Caco-2 (cell line): ENCODE measurements at regions of chr6 and their contacts with region 1.

Region 1: DNA sequence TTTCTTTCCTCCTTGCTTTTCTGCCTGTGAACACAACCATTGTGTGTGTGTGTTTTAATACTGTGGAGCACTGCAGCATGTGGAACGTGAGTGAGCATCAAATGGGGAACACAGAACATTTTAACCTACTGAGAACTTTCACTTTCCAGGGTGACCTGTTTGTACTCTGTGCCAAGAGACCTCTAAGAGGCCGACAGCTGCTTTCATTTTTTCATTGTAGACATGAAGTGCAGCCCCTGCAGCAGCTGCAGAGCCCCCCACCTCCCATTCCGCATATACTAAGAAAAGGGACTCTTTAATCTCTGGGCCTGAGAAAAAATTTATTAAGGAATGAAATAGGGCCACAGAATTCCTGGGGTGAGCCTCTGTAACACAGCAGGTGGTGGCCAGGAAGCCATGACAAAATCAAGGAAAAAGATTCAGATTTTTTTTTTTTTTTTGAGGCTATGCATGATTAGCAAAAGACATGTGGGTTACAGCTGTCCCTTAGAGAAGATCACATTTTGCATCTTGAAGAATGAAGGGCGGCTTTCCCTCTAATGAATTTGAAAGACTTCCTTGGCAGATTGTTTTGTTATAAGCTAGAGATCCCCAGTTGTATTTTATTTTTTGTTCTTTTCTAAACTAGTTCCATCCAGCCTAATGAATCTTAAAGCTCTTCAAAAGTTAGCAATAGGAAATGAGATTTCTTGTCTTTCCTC is 503.4 kb downstream of the CD109 start:
- DNase-seq: no peak
- H3K4me3 ChIP-seq: no peak overlapping the region
- H3K4me3 Mint-ChIP-seq: no peak overlapping the region
- H3K27ac Mint-ChIP-seq: no peak overlapping the region
- H3K4me1 ChIP-seq: peaks cover 24% of the 10 kb centered on the region
- H3K4me1 Mint-ChIP-seq: peaks cover 20% of the 10 kb centered on the region
- H3K27me3 ChIP-seq: no peaks in the 10 kb centered on the region
- H3K27me3 Mint-ChIP-seq: no peaks in the 10 kb centered on the region
- CTCF ChIP-seq: no peak

Region 2: DNA sequence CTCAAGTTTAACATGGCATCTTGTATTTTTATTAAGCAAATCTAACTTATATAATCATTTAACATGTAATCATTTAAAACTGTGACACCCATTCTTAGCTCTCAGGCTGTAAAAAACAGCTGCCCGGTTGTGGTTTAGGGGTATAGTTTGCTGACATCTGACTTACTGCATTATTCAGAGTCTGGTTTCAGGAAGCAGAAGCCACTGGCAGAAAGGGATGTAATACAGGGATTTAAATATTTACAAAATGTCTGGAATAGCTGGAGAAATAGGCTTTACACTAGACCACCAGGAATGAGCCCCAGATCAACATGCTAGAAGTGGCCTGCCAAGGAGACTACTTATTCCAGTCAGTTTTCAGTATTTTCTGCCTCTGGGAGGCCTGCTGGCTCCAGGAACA is 82.3 kb before region 1 on chr6:
- CTCF ChIA-PET with region 1: no interaction called
- POLR2A ChIA-PET with region 1: no interaction called
- intact Hi-C with region 1: no loop called
- DNase-seq: no peak
- H3K4me3 ChIP-seq: no peak overlapping the region
- H3K4me3 Mint-ChIP-seq: no peak overlapping the region
- H3K27ac Mint-ChIP-seq: no peak overlapping the region
- H3K4me1 ChIP-seq: no peaks in the 10 kb centered on the region
- H3K4me1 Mint-ChIP-seq: peaks cover 7% of the 10 kb centered on the region
- H3K27me3 ChIP-seq: no peaks in the 10 kb centered on the region
- H3K27me3 Mint-ChIP-seq: no peaks in the 10 kb centered on the region
- CTCF ChIP-seq: no peak

Region 3: GRCh38 chr6:74137911-74138310 is 61.5 kb before region 1 on chr6:
- CTCF ChIA-PET with region 1: no interaction called
- POLR2A ChIA-PET with region 1: no interaction called
- intact Hi-C with region 1: loop called (anchors 2 kb)
- DNase-seq: peak in 1 of 2 experiments; percentile 62
- H3K4me3 ChIP-seq: no peak overlapping the region
- H3K4me3 Mint-ChIP-seq: peak overlapping the region; percentile 58
- H3K27ac Mint-ChIP-seq: peak overlapping the region; percentile 89
- H3K4me1 ChIP-seq: 0 out of 2 replicates have a peak, but pooled peaks cover 3% of the 10 kb centered on the region
- H3K4me1 Mint-ChIP-seq: peaks cover 9% of the 10 kb centered on the region
- H3K27me3 ChIP-seq: no peaks in the 10 kb centered on the region
- H3K27me3 Mint-ChIP-seq: no peaks in the 10 kb centered on the region
- CTCF ChIP-seq: no peak

Region 4: DNA sequence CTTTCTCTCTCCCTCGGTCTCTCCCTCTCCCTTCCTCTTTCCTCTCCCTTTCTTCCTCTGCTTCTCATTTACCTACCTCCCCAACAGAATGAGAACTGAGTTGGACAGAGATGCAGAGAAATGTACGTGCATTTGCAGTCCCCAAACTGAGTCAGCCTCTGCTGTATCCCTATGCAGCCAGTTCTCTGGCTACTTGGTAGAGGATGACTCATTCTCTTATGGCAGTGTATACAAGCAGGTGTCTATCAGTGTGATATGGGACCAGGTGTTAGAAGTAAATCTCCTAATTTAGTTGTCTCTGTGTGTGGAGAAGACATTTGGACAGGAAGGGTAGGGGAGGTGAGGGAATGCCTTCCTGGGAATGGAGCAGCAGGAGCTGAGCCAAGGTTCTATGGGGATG is 32.5 kb before region 1 on chr6:
- CTCF ChIA-PET with region 1: no interaction called
- POLR2A ChIA-PET with region 1: no interaction called
- intact Hi-C with region 1: loop called (anchors 2 kb)
- DNase-seq: no peak
- H3K4me3 ChIP-seq: no peak overlapping the region
- H3K4me3 Mint-ChIP-seq: peak overlapping the region; percentile 10
- H3K27ac Mint-ChIP-seq: no peak overlapping the region
- H3K4me1 ChIP-seq: peaks cover 21% of the 10 kb centered on the region
- H3K4me1 Mint-ChIP-seq: peaks cover 13% of the 10 kb centered on the region
- H3K27me3 ChIP-seq: no peaks in the 10 kb centered on the region
- H3K27me3 Mint-ChIP-seq: no peaks in the 10 kb centered on the region
- CTCF ChIP-seq: no peak

Region 5: GRCh38 chr6:74222768-74223333 is 23.5 kb after region 1 on chr6:
- CTCF ChIA-PET with region 1: no interaction called
- POLR2A ChIA-PET with region 1: no interaction called
- intact Hi-C with region 1: loop called (anchors 2 kb)
- DNase-seq: peak in 1 of 2 experiments; percentile 7
- H3K4me3 ChIP-seq: no peak overlapping the region
- H3K4me3 Mint-ChIP-seq: no peak overlapping the region
- H3K27ac Mint-ChIP-seq: no peak overlapping the region
- H3K4me1 ChIP-seq: no peaks in the 10 kb centered on the region
- H3K4me1 Mint-ChIP-seq: no peaks in the 10 kb centered on the region
- H3K27me3 ChIP-seq: no peaks in the 10 kb centered on the region
- H3K27me3 Mint-ChIP-seq: no peaks in the 10 kb centered on the region
- CTCF ChIP-seq: no peak

Region 6: DNA sequence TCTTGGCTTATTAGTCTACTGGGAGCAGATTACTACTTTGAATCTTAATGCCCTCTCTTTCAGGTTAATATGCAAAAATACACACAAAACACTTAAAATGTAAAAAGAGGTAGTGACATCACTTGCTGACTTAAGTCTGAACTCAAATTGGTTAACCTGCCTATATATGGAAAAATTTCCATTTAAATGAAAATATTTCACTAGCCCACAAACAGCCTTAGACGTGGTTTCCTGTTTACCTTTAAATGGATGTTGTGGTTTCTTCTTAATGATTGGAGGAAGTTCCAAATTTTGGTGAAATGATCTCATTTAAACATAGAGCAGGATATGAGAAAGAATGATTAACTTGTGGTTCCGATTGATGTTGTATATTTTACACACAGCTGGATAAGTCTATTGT is 50.3 kb after region 1 on chr6:
- CTCF ChIA-PET with region 1: no interaction called
- POLR2A ChIA-PET with region 1: no interaction called
- intact Hi-C with region 1: loop called (anchors 1 kb)
- DNase-seq: no peak
- H3K4me3 ChIP-seq: no peak overlapping the region
- H3K4me3 Mint-ChIP-seq: no peak overlapping the region
- H3K27ac Mint-ChIP-seq: no peak overlapping the region
- H3K4me1 ChIP-seq: peaks cover 31% of the 10 kb centered on the region
- H3K4me1 Mint-ChIP-seq: peaks cover 9% of the 10 kb centered on the region
- H3K27me3 ChIP-seq: no peaks in the 10 kb centered on the region
- H3K27me3 Mint-ChIP-seq: no peaks in the 10 kb centered on the region
- CTCF ChIP-seq: no peak

Region 7: GRCh38 chr6:74534465-74535211 is 335.3 kb after region 1 on chr6:
- CTCF ChIA-PET with region 1: no interaction called
- POLR2A ChIA-PET with region 1: no interaction called
- intact Hi-C with region 1: no loop called
- DNase-seq: peak; percentile 71 to 75
- H3K4me3 ChIP-seq: no peak overlapping the region
- H3K4me3 Mint-ChIP-seq: peak overlapping the region; percentile 50
- H3K27ac Mint-ChIP-seq: peak overlapping the region; percentile 90
- H3K4me1 ChIP-seq: peaks cover 27% of the 10 kb centered on the region
- H3K4me1 Mint-ChIP-seq: no peaks in the 10 kb centered on the region
- H3K27me3 ChIP-seq: no peaks in the 10 kb centered on the region
- H3K27me3 Mint-ChIP-seq: no peaks in the 10 kb centered on the region
- CTCF ChIP-seq: no peak